Activated CD4-positive, alpha-beta memory T cell treated with anti-CD3 and anti-CD28 coated beads for 36 hours (primary cell): ENCODE measurements at regions of chrX and their contacts with region 1.

Region 1: DNA sequence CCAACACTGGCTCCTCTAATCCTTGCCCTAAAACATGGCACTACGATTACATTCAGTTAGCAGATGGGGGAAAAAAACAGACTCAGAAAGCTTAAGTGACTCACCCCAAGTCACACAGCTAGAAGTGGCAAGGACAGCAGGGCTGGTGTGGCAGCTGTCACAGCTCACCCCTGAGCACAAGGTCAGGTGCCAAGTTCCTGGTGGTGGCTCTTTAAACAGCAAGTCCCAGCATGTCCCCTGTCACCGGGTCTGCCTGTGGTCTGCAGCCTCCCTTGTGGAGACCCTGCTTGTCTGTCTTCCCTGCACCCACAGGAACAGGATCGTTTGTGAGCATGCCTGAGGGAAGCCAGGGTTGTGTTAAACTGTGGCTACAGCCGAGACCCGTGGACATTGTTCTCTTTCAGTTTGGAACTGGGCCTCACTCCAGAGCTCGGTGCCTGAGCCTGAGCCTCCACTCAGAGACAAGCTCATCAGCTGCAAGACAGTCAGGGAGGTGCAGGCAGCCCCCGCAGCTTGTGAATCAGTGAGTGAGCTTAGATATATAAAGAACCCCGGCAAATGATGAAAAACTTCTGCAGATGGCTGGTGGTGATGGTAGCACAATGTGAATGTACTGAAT is 260.8 kb downstream of the BCOR start:
- DNase-seq: peak; percentile 25
- H3K4me3 Mint-ChIP-seq: no peak overlapping the region
- H3K27ac Mint-ChIP-seq: no peak overlapping the region
- H3K4me1 Mint-ChIP-seq: no peaks in the 10 kb centered on the region
- H3K27me3 Mint-ChIP-seq: no peaks in the 10 kb centered on the region

Region 2: GRCh38 chrX:39854772-39855747 is 18.1 kb after region 1 on chrX:
- CTCF ChIA-PET with region 1: interaction called, 10 read pairs
- POLR2A ChIA-PET with region 1: no interaction called
- intact Hi-C with region 1: no loop called
- DNase-seq: peak; percentile 88
- H3K4me3 Mint-ChIP-seq: peak overlapping the region; percentile 82
- H3K27ac Mint-ChIP-seq: peak overlapping the region; percentile 98
- H3K4me1 Mint-ChIP-seq: peaks cover 60% of the 10 kb centered on the region
- H3K27me3 Mint-ChIP-seq: no peaks in the 10 kb centered on the region